SK-N-SH (cell line): ENCODE measurements at regions of chr16 and their contacts with region 1.

Region 1: GRCh38 chr16:3129137-3130131 is 5.4 kb upstream of the ZNF213 start:
- DNase-seq: peak; percentile 65
- H3K4me3 ChIP-seq: peak overlapping the region in 1 of 2 experiments; percentile 41; a peak in 2 of 4 replicates
- H3K27ac ChIP-seq: peak overlapping the region; percentile 14 to 35; a peak in 3 of 4 replicates
- H3K4me1 ChIP-seq: peaks cover 4 to 7% of the 10 kb centered on the region in 2 experiments; a peak in 2 of 4 replicates
- H3K27me3 ChIP-seq: no peaks in the 10 kb centered on the region
- CTCF ChIP-seq: peak; percentile 87
- EP300 ChIP-seq: no peak
- RAD21 ChIP-seq: peak; percentile 66

Region 2: DNA sequence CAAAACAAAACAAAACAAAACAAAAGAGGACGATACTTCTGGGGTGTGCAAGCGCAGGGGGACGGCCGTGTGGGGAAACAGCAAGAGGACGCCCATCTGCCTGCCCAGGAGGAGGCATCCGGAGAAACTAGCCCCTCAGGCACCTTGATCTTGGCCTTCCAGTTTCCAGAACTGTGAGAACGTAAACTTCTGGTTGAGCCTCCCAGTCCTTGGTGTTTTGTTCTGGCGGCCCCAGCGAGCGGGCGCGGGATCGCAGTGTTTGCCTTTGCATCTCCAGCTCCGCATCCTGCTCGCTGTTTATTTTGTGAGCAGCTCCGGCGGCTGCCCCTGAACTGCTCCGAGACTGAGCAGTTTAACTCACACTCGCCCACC is 84.1 kb before region 1 on chr16:
- CTCF ChIA-PET with region 1: interaction called, 16 read pairs
- POLR2A ChIA-PET with region 1: no interaction called
- DNase-seq: no peak
- H3K4me3 ChIP-seq: peak overlapping the region; percentile 33; a peak in 3 of 4 replicates
- H3K27ac ChIP-seq: no peak overlapping the region
- H3K4me1 ChIP-seq: no peaks in the 10 kb centered on the region; a peak in 1 of 4 replicates
- H3K27me3 ChIP-seq: peaks cover 78% of the 10 kb centered on the region
- CTCF ChIP-seq: no peak
- EP300 ChIP-seq: no peak
- RAD21 ChIP-seq: no peak

Region 3: GRCh38 chr16:3099732-3100499 is 29.5 kb before region 1 on chr16:
- CTCF ChIA-PET with region 1: interaction called, 16 read pairs
- POLR2A ChIA-PET with region 1: no interaction called
- DNase-seq: peak; percentile 98
- H3K4me3 ChIP-seq: no peak overlapping the region
- H3K27ac ChIP-seq: no peak overlapping the region
- H3K4me1 ChIP-seq: peaks cover 9 to 11% of the 10 kb centered on the region in 2 experiments; a peak in 2 of 4 replicates
- H3K27me3 ChIP-seq: no peaks in the 10 kb centered on the region
- CTCF ChIP-seq: no peak
- EP300 ChIP-seq: no peak
- RAD21 ChIP-seq: no peak

Region 4: GRCh38 chr16:3112058-3112880 is 17.2 kb before region 1 on chr16 and contains the start of gene ZNF205:
- CTCF ChIA-PET with region 1: interaction called, 64 read pairs
- POLR2A ChIA-PET with region 1: no interaction called
- DNase-seq: peak; percentile 92
- H3K4me3 ChIP-seq: peak within 1 kb of the TSS; percentile 78 to 96
- H3K27ac ChIP-seq: peak within 1 kb of the TSS in 1 of 2 experiments; percentile 61; a peak in 1 of 4 replicates
- H3K4me1 ChIP-seq: peaks cover 0 to 24% of the 10 kb centered on the region in 2 experiments; a peak in 1 of 4 replicates
- H3K27me3 ChIP-seq: no peaks in the 10 kb centered on the region
- CTCF ChIP-seq: no peak
- EP300 ChIP-seq: no peak
- RAD21 ChIP-seq: no peak
- polyA plus RNA-seq, gene ZNF205: 7.6 and 9.7 TPM in 2 replicates

Region 5: GRCh38 chr16:3150346-3151218 is 21.1 kb after region 1 on chr16:
- CTCF ChIA-PET with region 1: interaction called, 62 read pairs
- POLR2A ChIA-PET with region 1: interaction called, 18 read pairs
- DNase-seq: peak; percentile 98
- H3K4me3 ChIP-seq: peak overlapping the region; percentile 78 to 91
- H3K27ac ChIP-seq: peak overlapping the region; percentile 66 to 73
- H3K4me1 ChIP-seq: peaks cover 0 to 13% of the 10 kb centered on the region in 2 experiments; a peak in 1 of 4 replicates
- H3K27me3 ChIP-seq: no peaks in the 10 kb centered on the region
- CTCF ChIP-seq: no peak
- EP300 ChIP-seq: peak in 1 of 2 experiments; percentile 50; a peak in 1 of 4 replicates
- RAD21 ChIP-seq: no peak

Region 6: DNA sequence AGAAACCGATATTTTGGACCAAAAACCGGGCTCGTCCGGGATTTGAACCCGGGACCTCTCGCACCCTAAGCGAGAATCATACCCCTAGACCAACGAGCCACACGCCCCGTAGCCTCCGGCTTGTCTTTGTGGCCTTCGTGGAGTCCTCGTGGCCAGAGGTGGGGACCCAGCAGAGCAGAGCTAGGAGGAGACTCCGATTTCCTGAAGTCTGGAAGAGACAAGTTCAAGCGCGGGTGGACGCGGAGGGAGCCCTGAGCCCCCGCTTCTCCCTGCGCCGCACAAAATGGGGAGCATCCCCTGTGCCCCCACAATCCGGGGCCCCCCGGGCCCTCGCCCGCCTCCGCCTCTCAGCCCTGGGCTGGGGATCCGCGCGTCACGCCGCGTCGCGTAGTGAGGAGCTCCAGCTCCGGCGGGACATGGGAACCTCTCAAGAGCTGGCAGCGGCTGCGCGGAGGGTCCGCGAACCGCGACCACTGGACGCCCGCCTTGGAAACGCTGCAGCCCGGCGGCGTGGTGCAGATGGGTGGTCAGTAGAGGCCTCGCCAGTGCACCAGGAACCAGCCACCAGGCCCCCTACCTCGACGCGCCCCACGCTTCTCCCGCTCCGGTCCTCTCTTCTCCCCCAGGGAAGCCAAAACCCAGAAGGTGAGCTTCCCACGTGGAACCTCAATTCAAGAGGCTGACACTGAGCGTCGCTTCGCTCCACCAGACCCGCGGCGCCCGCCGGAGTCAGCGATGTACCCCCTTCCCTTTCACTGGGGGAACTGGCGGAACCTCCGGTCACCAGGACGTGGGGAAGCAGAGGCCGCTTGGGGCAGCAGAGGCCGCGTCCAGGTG is 53.4 kb after region 1 on chr16:
- CTCF ChIA-PET with region 1: interaction called, 12 read pairs
- POLR2A ChIA-PET with region 1: no interaction called
- DNase-seq: peak; percentile 74
- H3K4me3 ChIP-seq: peak overlapping the region; percentile 52 to 66
- H3K27ac ChIP-seq: no peak overlapping the region
- H3K4me1 ChIP-seq: peaks cover 0 to 11% of the 10 kb centered on the region in 2 experiments; a peak in 2 of 4 replicates
- H3K27me3 ChIP-seq: peaks cover 58% of the 10 kb centered on the region
- CTCF ChIP-seq: peak; percentile 36
- EP300 ChIP-seq: no peak
- RAD21 ChIP-seq: 0 out of 2 replicates have a peak, but pooled peaks have one; percentile 2